Left ventricle myocardium superior (tissue), 1 donor: ENCODE measurements at regions of chr7 and their contacts with region 1.

Region 1: GRCh38 chr7:25565949-25566348 is 337.7 kb upstream of the NPVF start:
- DNase-seq: peak; percentile 63
- ATAC-seq: peak; percentile 20

Region 2: GRCh38 chr7:25259587-25260243 is 306.2 kb before region 1 on chr7:
- intact Hi-C with region 1: loop called (anchors 5 kb)
- DNase-seq: peak; percentile 46
- ATAC-seq: peak; percentile 79

Region 3: DNA sequence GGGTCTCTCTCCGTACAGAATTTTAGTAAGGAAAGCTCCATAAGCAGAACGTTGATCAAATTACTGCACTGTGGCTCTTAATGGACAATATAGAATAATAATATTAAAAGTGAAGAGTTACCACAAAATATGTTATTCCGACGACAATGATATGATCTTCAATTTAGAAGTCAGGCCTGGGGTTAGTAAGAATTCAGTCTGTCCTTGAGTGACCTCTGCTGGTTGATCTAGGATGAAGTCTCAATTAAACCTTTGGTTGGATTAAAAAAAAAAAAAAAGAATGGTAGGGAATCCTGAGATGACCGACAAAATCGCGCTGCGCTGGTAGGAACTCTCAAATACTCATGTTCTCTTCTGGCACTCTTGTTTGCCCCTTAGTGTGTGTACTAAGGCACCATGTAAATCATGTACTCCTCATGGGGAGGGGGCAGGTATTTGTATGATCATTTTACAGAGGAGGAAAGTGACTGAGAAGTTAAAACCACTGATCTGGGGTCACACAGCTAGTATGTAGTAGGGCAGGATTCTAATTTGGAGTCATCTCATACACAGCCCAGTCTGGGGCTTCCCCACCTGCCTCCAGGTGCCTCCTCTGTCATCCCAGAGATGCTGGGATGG is 176.4 kb before region 1 on chr7:
- intact Hi-C with region 1: loop called (anchors 5 kb)
- DNase-seq: no peak
- ATAC-seq: no peak

Region 4: DNA sequence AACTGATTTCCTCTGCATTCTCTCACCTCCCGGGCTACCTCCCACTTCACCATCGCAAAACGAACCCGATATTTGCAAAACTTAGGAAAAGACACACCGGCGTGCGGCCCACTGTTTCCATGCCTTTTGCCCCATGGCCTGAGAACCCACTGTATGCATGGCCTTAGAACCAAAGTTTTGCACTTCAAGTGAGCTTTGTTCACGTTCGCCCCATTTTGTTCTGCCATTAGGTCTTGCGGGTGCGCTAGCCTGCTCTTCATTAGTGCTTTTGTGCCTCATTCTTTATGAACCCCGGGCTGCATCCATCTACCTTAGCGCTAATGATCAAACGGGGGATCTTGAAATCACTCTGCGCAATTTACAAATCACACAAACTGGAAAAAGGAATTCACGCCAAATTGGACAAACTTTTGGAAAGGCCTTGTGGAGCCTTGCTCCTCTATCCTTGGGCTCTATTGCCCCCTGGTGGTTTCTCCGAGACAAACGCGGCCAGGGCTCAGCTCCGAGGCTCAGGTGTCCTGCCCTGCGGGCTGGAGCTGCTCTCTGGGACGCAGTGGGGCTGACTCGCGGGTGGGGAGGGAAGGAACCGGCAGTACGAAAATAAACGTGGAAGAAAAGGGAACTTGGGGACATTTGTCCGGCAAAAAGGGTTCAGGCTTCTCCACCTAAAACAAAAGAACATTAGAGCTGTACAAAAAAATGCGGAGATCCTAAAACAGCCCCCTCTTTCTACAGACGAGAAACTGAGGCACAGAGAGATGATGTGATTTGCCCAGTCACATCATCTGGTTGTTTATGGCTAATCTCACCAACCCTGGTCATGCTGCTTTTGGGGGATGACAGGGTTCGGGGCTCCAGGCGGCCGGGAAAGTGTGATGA is 285.6 kb after region 1 on chr7:
- intact Hi-C with region 1: loop called (anchors 5 kb)
- DNase-seq: peak; percentile 85
- ATAC-seq: peak; percentile 74